ENCODE measurements at regions of chr15 and their contacts with region 1.

Region 1: GRCh38 chr15:46312133-46312740 is 677.4 kb downstream of the SQOR start:
- DNase-seq: peak; percentile 88
- ATAC-seq: peak; percentile 94
- H3K4me3 Mint-ChIP-seq: no peak overlapping the region
- H3K27ac Mint-ChIP-seq: no peak overlapping the region
- H3K4me1 Mint-ChIP-seq: peaks cover 11% of the 10 kb centered on the region
- H3K27me3 Mint-ChIP-seq: no peaks in the 10 kb centered on the region
- CTCF ChIP-seq: peak; percentile 75

Region 2: DNA sequence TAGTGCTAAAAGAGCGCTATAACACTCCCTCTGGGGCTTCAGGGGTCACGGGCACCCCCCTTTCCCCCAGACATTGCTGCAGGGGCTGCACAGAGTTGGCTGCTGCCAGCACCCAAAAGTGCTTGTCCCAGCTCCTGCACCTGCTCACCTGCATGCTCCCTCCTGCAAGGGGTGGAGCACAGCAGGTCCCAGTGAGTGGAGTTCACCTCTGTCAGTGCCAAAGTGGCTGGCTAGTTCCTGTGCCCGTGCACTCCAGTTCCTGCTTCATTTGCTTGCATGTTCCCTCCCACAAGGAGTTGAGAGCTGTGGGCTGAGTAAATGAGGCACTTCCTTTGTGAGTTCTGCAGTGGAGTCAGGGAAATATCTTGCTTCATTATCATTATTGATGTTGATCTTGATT is 200.5 kb before region 1 on chr15:
- CTCF ChIA-PET with region 1: no interaction called
- POLR2A ChIA-PET with region 1: no interaction called
- DNase-seq: no peak
- ATAC-seq: peak; percentile 32; the same call in 1 of the 2 replicates
- H3K4me3 Mint-ChIP-seq: no peak overlapping the region
- H3K27ac Mint-ChIP-seq: no peak overlapping the region
- H3K4me1 Mint-ChIP-seq: no peaks in the 10 kb centered on the region
- H3K27me3 Mint-ChIP-seq: no peaks in the 10 kb centered on the region; the same call in 1 of the 2 replicates
- CTCF ChIP-seq: no peak

Region 3: DNA sequence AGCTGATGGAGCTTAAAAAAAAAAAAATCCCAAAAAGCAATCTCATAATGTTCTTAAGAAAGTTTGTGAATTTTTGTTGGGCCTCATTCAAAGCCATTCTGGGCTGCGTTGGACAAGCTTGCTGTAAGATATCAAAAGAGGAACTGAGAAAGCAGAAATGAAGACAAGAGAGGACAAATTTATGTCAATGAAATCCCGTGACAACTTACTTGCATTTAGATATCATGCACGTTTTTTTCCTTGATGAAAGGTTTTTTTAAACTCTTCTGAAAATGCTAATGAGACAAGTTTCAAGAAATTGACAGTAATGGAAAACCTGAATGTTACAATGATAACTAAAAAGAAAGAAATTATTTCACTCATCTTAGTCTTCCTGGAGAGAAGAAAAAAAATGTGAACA is 14.5 kb before region 1 on chr15:
- CTCF ChIA-PET with region 1: interaction called, 26 read pairs
- POLR2A ChIA-PET with region 1: no interaction called
- DNase-seq: no peak
- ATAC-seq: no peak
- H3K4me3 Mint-ChIP-seq: no peak overlapping the region
- H3K27ac Mint-ChIP-seq: no peak overlapping the region
- H3K4me1 Mint-ChIP-seq: peaks cover 33% of the 10 kb centered on the region
- H3K27me3 Mint-ChIP-seq: no peaks in the 10 kb centered on the region
- CTCF ChIP-seq: no peak

Region 4: GRCh38 chr15:46322753-46323152 is 10.5 kb after region 1 on chr15:
- CTCF ChIA-PET with region 1: interaction called, 10 read pairs
- POLR2A ChIA-PET with region 1: no interaction called
- DNase-seq: no peak
- ATAC-seq: no peak
- H3K4me3 Mint-ChIP-seq: no peak overlapping the region
- H3K27ac Mint-ChIP-seq: 0 out of 2 replicates have a peak overlapping the region, but pooled peaks have one; percentile 45
- H3K4me1 Mint-ChIP-seq: peaks cover 26% of the 10 kb centered on the region
- H3K27me3 Mint-ChIP-seq: no peaks in the 10 kb centered on the region; the same call in 1 of the 2 replicates
- CTCF ChIP-seq: no peak

Region 5: DNA sequence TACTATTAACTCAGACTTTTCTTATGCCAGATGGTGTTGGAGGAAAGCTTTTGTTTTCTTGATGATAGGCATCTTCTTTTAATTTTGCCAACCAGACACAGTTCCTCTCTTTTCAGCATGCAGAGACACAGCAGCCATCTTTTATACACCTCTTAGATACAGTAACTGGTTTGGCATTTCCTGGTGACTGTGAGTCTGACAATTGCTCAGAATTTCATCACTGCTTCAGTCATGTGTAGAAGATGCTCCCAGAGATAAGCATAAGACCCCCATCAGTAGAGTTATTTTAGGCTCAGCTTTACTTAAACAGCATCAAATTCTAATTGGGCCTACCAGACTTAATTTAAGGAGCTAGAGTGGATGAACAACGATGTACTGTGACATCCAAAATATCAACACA is 101.6 kb after region 1 on chr15:
- CTCF ChIA-PET with region 1: no interaction called
- POLR2A ChIA-PET with region 1: no interaction called
- DNase-seq: no peak
- ATAC-seq: no peak
- H3K4me3 Mint-ChIP-seq: no peak overlapping the region
- H3K27ac Mint-ChIP-seq: no peak overlapping the region
- H3K4me1 Mint-ChIP-seq: peaks cover 7% of the 10 kb centered on the region
- H3K27me3 Mint-ChIP-seq: no peaks in the 10 kb centered on the region; the same call in 1 of the 2 replicates
- CTCF ChIP-seq: no peak

Region 6: DNA sequence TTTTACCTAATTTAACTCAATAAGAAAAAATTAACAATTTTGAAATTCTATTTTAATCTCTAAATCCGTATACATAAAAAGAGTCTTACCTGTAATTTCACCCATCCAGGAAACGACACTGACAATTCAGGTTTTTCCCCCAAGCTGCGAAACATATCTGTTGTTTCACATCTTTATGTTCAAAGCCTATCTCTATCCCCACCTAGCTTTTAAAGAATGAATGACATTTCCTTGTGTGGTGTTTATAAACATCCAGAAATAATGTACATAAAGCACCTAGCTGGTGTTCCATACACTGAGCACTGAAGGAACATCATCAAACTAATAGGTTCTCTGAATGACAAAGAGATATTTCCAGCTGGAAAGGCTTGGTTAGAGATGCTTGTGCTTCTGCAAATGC is 190.4 kb after region 1 on chr15:
- CTCF ChIA-PET with region 1: interaction called, 30 read pairs
- POLR2A ChIA-PET with region 1: no interaction called
- DNase-seq: no peak
- ATAC-seq: no peak
- H3K4me3 Mint-ChIP-seq: no peak overlapping the region
- H3K27ac Mint-ChIP-seq: no peak overlapping the region
- H3K4me1 Mint-ChIP-seq: no peaks in the 10 kb centered on the region
- H3K27me3 Mint-ChIP-seq: no peaks in the 10 kb centered on the region
- CTCF ChIP-seq: peak; percentile 24; the same call in 1 of the 2 replicates

Measured in WTC11 (cell line).